ENCODE measurements at regions of chr11 and their contacts with region 1.

Region 1: DNA sequence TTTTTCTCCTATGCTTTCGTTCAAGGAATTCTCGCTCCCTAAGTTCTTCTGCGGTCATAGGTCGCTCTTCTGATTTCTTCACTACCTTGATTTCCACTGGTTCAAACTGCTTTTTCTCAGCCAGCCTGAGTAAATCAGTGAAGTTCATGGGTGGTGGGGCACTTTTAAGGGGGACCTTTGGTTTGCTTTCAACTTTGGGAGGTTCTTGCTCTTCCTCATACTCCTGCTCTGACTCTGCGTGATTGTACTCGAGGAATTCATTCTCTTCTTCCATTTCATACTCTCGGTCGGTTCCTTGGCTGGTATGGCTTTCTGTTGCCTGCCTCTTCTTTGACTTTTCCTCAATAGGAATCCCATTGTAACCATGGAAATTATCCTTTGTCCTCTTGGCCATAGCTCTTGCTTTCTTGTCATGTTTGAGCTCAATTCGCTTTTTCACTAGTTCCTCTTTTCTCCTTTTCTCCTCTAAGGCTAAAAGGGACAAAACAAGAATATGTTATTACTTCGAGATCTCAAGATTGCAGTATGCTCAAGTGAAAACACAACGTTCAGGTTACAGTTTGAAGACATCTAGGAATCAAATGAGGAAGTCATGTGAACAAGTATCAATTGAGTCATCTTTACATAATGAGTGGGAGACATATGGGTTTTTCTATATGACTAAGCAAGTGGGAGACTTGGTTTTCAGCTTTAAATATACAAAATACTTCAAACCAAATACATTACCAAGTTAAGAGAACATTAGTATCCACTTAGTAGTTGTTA is 16.2 kb downstream of the MISFA start:
- DNase-seq: peak; percentile 79
- ATAC-seq: peak; percentile 93
- H3K4me3 ChIP-seq: peak overlapping the region; percentile 8; the same call in 1 of the 2 replicates
- H3K27ac ChIP-seq: peak overlapping the region; percentile 69
- H3K4me1 ChIP-seq: peaks cover 38% of the 10 kb centered on the region
- H3K27me3 ChIP-seq: no peaks in the 10 kb centered on the region
- CTCF ChIP-seq: no peak
- EP300 ChIP-seq: peak; percentile 75 to 85
- POLR2A ChIP-seq: no peak
- RAD21 ChIP-seq: no peak

Region 2: GRCh38 chr11:18427240-18427639 is 188.6 kb before region 1 on chr11:
- CTCF ChIA-PET with region 1: no interaction called
- POLR2A ChIA-PET with region 1: interaction called, 10 read pairs
- RAD21 ChIA-PET with region 1: no interaction called
- SMC1A ChIA-PET with region 1: no interaction called
- in situ Hi-C with region 1: no loop called
- intact Hi-C with region 1: no loop called
- DNase-seq: no peak
- ATAC-seq: no peak
- H3K4me3 ChIP-seq: no peak overlapping the region
- H3K27ac ChIP-seq: no peak overlapping the region
- H3K4me1 ChIP-seq: no peaks in the 10 kb centered on the region
- H3K27me3 ChIP-seq: no peaks in the 10 kb centered on the region
- CTCF ChIP-seq: no peak
- EP300 ChIP-seq: no peak
- POLR2A ChIP-seq: no peak
- RAD21 ChIP-seq: no peak

Region 3: DNA sequence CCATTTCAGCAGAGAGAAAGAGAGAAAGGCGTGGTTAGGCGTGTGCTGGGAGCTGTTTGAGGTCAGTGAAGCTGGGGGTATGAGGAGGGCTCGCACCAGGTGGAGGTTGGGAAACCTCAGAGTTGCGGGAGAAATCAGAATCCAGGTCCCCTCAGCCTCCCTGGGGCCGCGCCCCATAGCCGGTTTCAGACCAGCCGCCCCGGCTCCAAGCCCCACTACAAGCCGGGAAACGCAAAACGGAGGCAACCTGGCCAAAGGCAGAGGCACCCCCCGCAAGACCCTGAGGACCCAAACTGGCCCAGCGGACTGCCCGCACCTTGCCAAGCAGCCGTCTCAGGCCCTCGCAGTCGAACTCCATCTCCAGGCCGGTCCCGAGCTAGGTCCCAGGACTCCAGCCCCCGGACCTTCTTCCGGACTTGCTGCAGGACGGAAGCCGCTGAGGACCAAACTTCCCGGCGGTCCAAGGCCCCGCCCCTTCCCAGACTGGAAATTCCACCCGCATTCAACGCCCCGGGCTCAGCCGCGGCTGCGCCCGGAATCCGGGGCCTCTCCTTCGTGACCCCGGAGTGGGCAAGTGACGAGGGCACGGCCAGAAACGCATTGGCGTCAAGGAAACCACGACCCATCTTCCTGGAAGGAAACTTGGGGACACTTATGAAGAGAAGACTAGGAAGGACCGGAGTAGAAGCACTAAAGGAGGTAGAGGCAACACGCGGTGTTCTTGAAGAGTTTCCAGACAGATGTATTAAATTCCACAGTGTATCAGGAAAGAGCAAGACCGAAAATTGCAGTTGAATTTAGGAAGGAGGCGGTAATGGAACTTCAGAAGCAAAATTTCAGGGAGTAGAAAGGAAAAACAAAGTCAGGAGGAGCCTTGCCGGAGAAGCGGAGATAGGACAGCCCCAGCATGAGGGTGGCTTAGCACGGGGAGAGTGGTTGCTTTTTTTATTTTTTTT is 27.2 kb before region 1 on chr11 and contains the start of gene UEVLD:
- CTCF ChIA-PET with region 1: interaction called, 3 read pairs
- POLR2A ChIA-PET with region 1: interaction called, 4 read pairs
- RAD21 ChIA-PET with region 1: interaction called, 8 read pairs
- SMC1A ChIA-PET with region 1: interaction called, 19 read pairs
- in situ Hi-C with region 1: no loop called
- intact Hi-C with region 1: no loop called
- DNase-seq: peak; percentile 31
- ATAC-seq: peak; percentile 77
- H3K4me3 ChIP-seq: peak within 1 kb of the TSS; percentile 80
- H3K27ac ChIP-seq: peak within 1 kb of the TSS; percentile 67
- H3K4me1 ChIP-seq: peaks cover 7% of the 10 kb centered on the region
- H3K27me3 ChIP-seq: no peaks in the 10 kb centered on the region
- CTCF ChIP-seq: no peak
- EP300 ChIP-seq: no peak
- POLR2A ChIP-seq: peak; percentile 85
- RAD21 ChIP-seq: no peak
- polyA plus RNA-seq, gene UEVLD: 6.5 to 9.6 TPM

Region 4: GRCh38 chr11:18785411-18785810 is 169.6 kb after region 1 on chr11:
- CTCF ChIA-PET with region 1: no interaction called
- POLR2A ChIA-PET with region 1: no interaction called
- RAD21 ChIA-PET with region 1: no interaction called
- SMC1A ChIA-PET with region 1: no interaction called
- in situ Hi-C with region 1: no loop called
- intact Hi-C with region 1: no loop called
- DNase-seq: no peak
- ATAC-seq: no peak
- H3K4me3 ChIP-seq: no peak overlapping the region
- H3K27ac ChIP-seq: no peak overlapping the region
- H3K4me1 ChIP-seq: no peaks in the 10 kb centered on the region
- H3K27me3 ChIP-seq: peaks cover 3 to 5% of the 10 kb centered on the region in 2 experiments; a peak in 3 of 4 replicates
- CTCF ChIP-seq: no peak
- EP300 ChIP-seq: no peak
- POLR2A ChIP-seq: no peak
- RAD21 ChIP-seq: no peak